ENCODE measurements at regions of chr3 and their contacts with region 1.

Region 1: DNA sequence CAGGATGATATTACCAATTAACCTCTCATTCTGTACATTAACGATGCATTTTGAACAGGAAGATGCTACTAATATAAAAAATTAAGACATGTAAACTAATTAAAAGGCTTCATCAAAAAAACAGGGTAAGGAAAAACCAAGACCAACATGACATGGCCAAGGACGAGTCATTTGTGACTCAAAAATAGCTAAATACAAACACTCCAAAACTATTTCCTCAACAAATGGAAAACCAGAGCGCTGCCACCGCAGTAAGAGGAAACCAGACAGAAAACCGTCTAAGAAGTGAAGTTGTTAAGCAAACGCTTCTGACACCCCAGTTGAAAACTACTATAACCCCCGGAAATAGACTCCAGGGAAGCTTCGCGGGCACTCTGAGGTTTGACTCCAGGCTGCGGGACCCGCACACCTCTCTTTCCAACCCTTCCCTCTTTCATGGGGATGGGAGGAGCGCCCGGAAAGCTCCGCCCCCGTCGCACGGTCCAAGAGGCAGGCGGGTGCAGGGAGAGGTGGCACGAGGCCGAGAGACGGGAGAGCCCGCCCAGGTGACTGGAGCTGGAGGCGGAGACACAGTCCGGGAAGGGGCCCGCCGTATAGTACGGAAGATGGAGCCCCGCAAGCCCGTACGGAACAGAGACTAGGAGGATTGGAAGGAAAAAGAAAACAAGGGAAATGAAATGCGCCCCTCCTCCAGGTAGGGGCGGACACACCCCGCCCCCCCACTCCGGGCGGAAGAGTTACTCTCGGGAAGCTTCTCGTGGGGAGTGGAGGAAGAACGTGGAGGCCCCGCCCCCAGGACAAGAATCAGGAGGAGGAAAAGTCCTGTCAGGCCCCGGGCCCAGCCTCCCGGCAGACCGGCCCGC is 708 bp downstream of the DCAF1 start:
- DNase-seq: peak; percentile 49
- H3K4me3 ChIP-seq: peak overlapping the region; percentile 80
- CTCF ChIP-seq: no peak

Region 2: GRCh38 chr3:51391075-51391567 is 108.0 kb before region 1 on chr3 and contains the start of gene RBM15B:
- CTCF ChIA-PET with region 1: interaction called, 19 read pairs
- POLR2A ChIA-PET with region 1: no interaction called
- DNase-seq: peak; percentile 63
- H3K4me3 ChIP-seq: peak within 1 kb of the TSS; percentile 75
- CTCF ChIP-seq: peak; percentile 96

Region 3: GRCh38 chr3:51519848-51520247 is 20.7 kb after region 1 on chr3:
- CTCF ChIA-PET with region 1: interaction called, 44 read pairs
- POLR2A ChIA-PET with region 1: no interaction called
- DNase-seq: no peak
- H3K4me3 ChIP-seq: no peak overlapping the region
- CTCF ChIP-seq: no peak

Region 4: DNA sequence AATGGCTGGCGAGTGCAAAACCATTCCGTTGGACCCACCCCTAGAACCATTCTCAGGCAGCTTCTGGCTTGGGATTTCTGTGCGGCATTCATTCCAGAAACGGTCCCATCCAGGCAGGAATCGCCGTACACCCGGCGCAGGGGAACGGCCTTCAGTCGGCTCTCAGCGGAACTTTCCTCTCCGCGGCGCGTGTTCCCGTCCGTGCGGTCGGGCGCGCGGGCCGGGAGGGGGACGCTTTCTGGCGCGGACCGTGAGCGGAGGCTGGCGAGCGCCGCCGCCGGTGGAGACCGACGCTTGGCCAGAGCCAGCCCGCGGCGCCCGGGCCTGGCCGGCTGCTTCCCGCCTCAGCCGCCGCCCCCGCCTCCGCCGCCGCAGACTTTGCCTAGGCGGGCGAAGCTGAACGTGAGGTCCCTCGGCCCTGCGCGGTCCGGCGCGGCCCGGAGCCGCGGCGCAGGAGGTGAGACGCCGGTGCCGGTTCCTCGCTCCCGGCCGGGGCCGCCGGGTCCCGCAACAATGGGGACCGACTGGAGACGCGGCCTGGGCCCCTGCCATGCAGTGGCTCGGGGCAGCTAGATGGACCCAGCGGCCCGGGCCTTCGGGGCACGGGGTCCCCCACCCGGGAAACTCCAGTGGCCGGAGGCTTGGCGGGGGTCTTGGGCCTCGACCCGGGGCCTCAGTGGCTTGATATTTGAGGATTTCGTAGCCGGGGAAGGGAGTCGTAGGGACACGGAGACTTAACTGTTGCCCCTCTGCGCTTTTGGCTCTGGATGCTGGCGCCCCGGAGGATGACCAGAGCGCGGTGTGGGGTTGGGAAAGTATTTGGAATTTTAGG is 39.6 kb after region 1 on chr3 and contains the start of gene RAD54L2:
- CTCF ChIA-PET with region 1: interaction called, 38 read pairs
- POLR2A ChIA-PET with region 1: no interaction called
- DNase-seq: no peak
- H3K4me3 ChIP-seq: peak within 1 kb of the TSS; percentile 75
- CTCF ChIP-seq: peak; percentile 33

Region 5: GRCh38 chr3:51637941-51638471 is 138.9 kb after region 1 on chr3:
- CTCF ChIA-PET with region 1: interaction called, 25 read pairs
- POLR2A ChIA-PET with region 1: no interaction called
- DNase-seq: no peak
- H3K4me3 ChIP-seq: no peak overlapping the region
- CTCF ChIP-seq: peak; percentile 85

Region 6: DNA sequence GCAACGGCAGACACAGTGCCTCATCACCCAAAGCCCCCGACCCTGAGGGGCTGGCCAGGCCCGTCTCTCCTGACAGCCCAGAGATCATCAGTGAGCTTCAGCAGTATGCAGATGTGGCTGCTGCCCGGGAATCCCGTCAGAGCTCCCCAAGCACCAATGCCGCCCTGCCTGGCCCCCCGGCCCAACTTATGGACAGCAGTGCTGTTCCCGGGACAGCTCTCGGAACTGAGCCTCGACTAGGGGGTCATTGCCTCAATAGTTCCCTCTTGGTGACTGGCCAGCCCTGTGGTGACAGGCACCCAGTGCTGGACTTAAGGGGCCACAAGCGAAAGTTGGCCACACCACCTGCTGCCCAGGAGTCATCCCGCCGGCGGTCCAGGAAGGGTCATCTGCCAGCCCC is 163.3 kb after region 1 on chr3:
- CTCF ChIA-PET with region 1: interaction called, 349 read pairs
- POLR2A ChIA-PET with region 1: no interaction called
- DNase-seq: no peak
- H3K4me3 ChIP-seq: no peak overlapping the region
- CTCF ChIP-seq: no peak

Region 7: DNA sequence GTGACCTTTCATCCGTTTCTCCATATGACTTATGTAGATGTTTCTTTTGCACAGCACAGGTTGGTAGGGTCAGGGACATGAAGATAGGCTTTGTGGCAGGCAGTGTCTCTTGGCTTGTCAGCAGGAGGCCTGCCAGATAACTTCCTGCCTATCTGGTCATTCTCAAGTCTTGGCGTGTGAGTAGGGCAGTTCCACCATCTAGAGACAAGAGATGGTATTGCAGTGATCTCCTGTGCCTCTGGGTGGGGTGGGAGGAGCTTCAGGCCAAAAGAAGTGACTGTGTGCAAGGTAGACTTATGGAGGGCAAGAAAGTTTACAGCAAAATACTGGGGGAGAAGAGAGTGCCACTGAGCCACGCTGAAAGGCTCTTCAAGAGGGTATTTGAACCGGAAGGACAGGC is 183.0 kb after region 1 on chr3:
- CTCF ChIA-PET with region 1: interaction called, 264 read pairs
- POLR2A ChIA-PET with region 1: interaction called, 7 read pairs
- DNase-seq: peak; percentile 63
- H3K4me3 ChIP-seq: no peak overlapping the region
- CTCF ChIP-seq: peak; percentile 84